ENCODE measurements at regions of chr16 and their contacts with region 1.

Region 1: DNA sequence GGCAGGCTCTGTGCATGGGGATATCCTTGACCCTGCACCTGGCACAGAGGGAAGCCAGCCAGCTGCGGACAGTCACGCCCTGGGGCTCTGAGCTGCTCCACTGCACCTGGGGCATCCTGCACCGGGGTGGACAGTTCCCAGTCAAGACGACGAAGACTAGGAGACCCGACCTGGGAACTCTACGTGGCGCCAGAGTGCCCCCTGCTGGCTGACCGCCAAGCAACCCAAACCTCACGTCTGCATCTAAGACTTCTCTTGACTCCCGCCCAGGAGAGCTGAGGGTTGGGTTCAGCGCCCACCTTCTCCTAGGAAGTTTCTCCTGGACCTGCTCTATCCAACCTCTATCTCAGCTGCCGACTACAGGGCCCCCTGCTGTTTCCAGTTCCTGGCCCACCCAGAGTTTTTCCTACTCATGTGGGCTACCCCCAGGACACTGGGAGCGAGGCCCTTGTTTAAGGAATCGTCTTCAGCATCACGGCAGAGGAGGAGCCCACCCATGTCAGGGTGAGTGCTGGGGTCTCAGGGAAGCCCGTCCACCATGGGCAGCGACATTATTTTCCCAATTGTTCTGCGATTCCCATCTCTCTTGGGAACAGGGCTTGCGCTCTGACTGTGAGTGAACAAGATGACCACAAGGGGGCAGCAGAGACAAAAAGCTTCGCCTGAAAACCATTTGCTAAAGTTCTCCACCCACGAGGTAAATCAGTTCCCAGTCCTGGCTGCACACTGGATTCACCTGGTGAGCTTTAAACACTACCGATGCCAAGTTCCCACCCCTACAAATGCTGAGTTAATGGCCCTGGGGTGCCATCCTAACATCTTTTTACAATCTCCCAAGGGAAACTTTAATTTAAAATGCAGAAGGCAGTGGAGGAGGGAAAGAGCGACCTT is 29.3 kb downstream of the TLE7 start:
- DNase-seq: peak; percentile 46
- H3K4me3 Mint-ChIP-seq: no peak overlapping the region
- H3K27ac Mint-ChIP-seq: no peak overlapping the region
- H3K4me1 Mint-ChIP-seq: peaks cover 8% of the 10 kb centered on the region
- H3K27me3 Mint-ChIP-seq: peaks cover 19% of the 10 kb centered on the region

Region 2: DNA sequence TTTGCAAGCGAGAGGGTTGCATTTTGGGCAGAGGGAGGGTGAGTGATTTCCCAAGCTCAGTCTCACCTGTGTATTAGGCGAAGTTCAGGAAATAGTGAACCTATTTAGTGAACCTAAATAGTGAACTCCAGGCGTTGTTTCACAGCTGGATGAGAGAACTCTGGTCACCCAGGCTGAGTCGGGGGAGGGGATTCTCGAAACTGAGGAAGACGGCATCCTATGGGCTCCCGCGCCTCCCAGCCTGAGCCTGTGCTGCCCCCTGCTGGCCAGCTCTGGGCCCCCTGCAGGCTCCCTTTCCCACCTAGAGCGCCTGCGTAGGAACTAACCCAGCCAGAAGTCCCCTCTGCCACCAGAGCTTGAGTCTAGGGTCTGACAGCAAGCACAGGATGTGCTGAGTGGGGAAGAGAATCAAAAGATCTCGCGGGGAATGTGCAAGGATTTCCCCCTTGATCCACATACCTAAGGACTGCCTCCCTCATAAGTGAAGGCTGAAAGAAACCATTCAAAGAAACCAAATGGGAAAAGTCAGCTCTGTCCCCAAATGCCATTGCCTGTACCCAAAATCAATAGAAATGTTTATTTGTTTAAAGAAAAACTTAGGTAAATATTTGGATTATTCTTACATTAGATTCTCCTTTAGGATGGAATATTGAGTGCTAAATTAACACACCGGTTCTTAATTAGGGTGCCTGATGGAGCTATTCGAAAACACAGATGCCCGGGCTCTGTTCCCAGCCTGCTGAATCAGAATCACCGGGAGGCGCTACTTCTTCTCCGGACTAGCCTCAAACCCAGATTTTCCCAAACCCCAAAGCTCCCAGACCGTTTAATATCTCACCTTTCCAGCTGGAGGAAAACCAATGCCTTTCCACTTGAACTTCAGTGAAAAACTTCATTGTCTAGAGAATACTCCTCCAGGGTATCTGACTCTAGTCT is 198.7 kb after region 1 on chr16:
- intact Hi-C with region 1: loop called (anchors 2 kb)
- DNase-seq: peak; percentile 59
- H3K4me3 Mint-ChIP-seq: no peak overlapping the region
- H3K27ac Mint-ChIP-seq: no peak overlapping the region
- H3K4me1 Mint-ChIP-seq: no peaks in the 10 kb centered on the region
- H3K27me3 Mint-ChIP-seq: peaks cover 15% of the 10 kb centered on the region